Testis (tissue), 5 donors: ENCODE measurements at regions of chr12 and their contacts with region 1.

Region 1: DNA sequence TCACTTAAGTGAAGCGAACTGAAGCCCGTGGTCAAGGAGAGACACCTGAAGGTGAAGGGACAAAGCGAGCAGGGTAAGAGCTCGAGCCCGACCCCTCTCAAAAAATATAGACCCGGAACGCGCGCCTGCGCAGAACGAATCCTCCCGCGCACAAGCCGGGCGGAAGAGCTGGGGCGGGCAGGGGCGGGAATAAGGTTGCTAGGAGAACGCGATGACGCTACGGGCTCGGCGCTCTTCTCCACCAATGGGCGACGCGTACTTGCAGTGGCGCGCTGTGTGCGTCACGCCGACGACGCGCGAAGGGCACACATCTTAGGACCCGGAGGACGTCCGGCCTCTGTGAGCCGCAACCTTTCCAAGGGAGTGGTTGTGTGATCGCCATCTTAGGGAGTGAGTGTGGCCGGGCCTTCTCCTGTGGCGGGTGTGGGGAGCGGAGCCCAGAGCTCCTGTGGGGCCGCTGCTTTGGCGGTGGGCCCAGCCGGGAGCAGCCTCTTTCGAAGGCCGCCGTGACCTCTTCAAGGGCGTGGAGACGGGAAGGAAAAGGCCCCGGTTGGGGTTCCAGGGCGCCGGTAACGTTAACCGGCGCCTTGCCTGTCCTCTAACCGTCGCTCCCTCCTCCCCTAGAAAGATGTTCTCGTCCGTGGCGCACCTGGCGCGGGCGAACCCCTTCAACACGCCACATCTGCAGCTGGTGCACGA is at the start of gene SLC25A3:
- DNase-seq: peak; percentile 99
- H3K4me3 ChIP-seq: peak within 1 kb of the TSS; percentile 96 to 99
- H3K27ac ChIP-seq: peak within 1 kb of the TSS; percentile 98 to 99
- H3K4me1 ChIP-seq: peaks cover 9% of the 10 kb centered on the region
- H3K27me3 ChIP-seq: no peaks in the 10 kb centered on the region
- CTCF ChIP-seq: no peak
- POLR2A ChIP-seq: peak; percentile 85
- total RNA-seq, gene SLC25A3: 202 to 273 TPM

Region 2: DNA sequence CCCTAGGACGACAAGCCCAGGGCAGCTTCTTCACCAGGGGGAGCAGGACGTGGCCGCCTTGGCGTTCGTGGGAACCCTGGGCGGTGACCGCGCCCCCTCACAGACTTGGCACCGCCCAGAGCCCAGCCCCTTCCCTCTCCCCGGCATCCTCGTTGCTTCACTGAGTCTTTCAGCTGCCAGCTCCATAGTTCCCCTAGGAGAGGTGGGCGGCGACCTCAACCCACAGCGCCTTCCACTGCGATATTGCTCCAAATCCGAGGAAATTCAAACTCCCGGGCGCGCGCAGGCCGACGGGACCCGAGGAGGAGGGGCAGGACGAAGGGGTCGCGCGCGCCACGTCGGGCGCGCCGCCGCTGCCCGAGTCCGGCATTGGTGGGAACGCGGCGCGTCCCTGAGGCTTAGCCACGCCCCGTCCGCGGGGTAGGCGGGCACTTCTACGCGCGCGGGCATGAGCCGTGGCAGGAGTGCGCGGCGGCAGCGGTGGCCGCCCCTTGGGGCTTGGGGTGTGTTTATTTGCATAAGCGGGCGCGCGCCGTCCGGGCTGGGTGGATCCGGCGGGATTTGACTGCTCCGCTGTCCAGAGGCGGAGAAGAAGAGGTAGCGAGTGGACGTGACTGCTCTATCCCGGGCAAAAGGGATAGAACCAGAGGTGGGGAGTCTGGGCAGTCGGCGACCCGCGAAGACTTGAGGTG is 51.4 kb after region 1 on chr12 and contains the starts of genes APAF1 and IKBIP:
- intact Hi-C with region 1: loop called (anchors 2 kb)
- DNase-seq: peak; percentile 98
- H3K4me3 ChIP-seq: peak within 1 kb of the TSS; percentile 87 to 90
- H3K27ac ChIP-seq: peak within 1 kb of the TSS; percentile 88 to 89
- H3K4me1 ChIP-seq: peaks cover 4% of the 10 kb centered on the region
- H3K27me3 ChIP-seq: no peaks in the 10 kb centered on the region
- CTCF ChIP-seq: no peak
- POLR2A ChIP-seq: peak; percentile 32
- total RNA-seq, gene APAF1: 10.6 to 11.1 TPM
- total RNA-seq, gene IKBIP: 7.4 to 7.7 TPM

Region 3: GRCh38 chr12:99372257-99372920 is 778.9 kb after region 1 on chr12:
- intact Hi-C with region 1: no loop called
- DNase-seq: no peak
- H3K4me3 ChIP-seq: no peak overlapping the region
- H3K27ac ChIP-seq: no peak overlapping the region
- H3K4me1 ChIP-seq: no peaks in the 10 kb centered on the region
- H3K27me3 ChIP-seq: no peaks in the 10 kb centered on the region
- CTCF ChIP-seq: no peak
- POLR2A ChIP-seq: no peak